Activated T-helper 2 cell treated with anti-CD3 and anti-CD28 coated beads, Interferon-gamma antibody, Interleukin-2, Interleukin-4, amounts not matched to agents 10 μg/mL and 5 μg/mL and 100 μg/mL, durations not matched to agents 14 hours and 24 hours and 36 hours (primary cell): ENCODE measurements at regions of chr22 and their contacts with region 1.

Region 1: GRCh38 chr22:28009272-28009827 is 90.3 kb upstream of the PITPNB start:
- DNase-seq: peak; percentile 55
- H3K4me3 Mint-ChIP-seq: no peak overlapping the region
- H3K27ac Mint-ChIP-seq: no peak overlapping the region
- H3K4me1 Mint-ChIP-seq: no peaks in the 10 kb centered on the region
- H3K27me3 Mint-ChIP-seq: no peaks in the 10 kb centered on the region

Region 2: DNA sequence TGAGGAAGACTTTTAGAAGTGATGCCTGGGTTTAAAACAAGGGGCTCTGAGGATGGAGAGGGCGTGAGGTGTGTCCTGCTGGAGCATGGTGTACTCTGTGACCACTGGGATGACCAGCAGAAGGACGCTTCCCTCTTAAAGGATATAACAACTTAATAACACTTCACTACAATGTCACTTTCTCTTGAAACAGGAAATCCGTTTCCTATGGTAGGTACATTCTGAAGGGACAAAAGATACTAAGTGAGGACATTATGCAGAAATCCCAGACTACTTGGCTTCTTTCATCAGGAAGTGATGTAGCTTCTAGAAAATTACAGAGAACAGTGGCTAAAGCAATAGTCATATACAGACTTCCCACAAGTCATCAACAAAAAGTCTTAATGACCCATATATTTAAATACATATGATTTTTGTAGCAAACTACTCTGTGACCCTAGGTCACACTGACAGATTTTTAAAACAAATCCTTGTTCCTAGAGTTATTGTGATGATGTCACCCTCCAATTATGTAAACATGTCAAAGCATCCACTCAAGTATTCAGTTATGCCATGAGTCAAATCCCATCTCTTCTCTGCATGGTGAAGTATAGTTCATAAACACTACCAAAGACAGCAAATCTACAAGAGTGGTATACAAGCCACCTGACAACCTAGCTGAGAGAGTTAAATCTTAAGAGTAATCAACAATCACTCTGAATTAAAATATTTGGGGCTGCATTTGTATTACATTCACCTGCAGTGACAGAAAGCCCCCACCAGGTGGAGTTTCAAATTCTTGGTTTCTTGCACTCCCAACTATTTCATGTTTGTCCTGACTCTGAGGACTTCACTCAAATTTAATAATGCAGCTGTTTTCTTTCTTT is 123.1 kb before region 1 on chr22:
- intact Hi-C with region 1: loop called (anchors 1 kb)
- DNase-seq: no peak
- H3K4me3 Mint-ChIP-seq: no peak overlapping the region
- H3K27ac Mint-ChIP-seq: no peak overlapping the region
- H3K4me1 Mint-ChIP-seq: peaks cover 7% of the 10 kb centered on the region
- H3K27me3 Mint-ChIP-seq: no peaks in the 10 kb centered on the region

Region 3: DNA sequence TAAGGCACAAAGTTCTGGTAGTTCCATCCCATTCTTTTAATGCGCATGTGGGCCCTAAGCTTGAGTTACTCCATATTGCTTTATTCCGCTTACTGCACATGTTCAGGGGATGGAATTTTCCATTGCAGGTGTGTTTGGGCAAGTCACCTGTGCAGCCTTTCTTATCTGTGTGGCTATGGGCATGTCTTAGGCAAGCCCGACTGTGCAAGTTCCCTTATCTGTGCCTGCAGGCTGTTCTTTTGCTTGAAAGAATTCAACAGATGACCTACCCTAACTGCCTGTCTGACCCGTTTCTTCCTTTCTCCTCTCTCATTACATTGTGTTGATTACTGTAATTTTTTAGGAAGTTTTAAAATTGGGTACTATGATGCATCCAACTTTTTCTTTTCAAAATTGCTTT is 306.7 kb after region 1 on chr22:
- intact Hi-C with region 1: no loop called
- DNase-seq: no peak
- H3K4me3 Mint-ChIP-seq: no peak overlapping the region
- H3K27ac Mint-ChIP-seq: no peak overlapping the region
- H3K4me1 Mint-ChIP-seq: no peaks in the 10 kb centered on the region
- H3K27me3 Mint-ChIP-seq: peaks cover 3% of the 10 kb centered on the region